Heart left ventricle (tissue), 16 donors: ENCODE measurements at regions of chr4 and their contacts with region 1.

Region 1: DNA sequence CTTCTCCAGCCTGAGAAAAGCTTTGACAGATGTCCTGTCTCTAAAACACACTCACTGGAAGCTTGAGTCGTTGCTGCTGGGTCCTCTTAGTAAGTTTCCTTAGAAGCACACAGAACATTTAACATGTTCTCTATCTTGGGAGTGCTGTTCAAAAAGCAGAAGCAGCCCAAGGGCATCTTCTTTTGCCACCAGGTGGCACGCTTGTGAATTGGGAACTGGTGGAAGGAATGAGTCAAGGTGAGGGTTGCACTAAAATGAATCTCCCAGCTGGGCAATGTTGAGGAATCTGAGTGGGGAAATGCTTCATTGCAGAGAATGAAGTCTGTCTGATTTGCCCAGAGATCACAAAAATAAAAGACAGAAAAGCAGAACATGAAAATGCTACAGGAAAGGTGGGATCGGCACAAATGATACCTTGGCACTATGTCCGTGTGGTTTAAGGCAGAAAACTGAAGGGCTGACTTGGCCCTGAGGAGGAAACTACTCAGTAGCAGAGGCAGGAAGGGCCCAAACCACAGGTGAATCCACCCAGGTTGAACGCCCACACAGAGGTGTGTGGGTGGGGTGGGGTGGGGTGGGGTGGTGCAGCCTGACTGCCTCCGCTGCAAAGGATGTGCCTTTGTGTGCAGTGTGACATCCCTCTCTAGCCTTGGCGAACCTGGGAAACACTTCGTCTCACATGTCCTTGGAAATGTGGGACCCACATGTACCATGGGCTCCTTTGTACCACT is 26.0 kb downstream of the KIT start:
- DNase-seq: peak in 1 of 5 donors; percentile 25
- ATAC-seq: no peak
- H3K4me3 ChIP-seq: no peak overlapping the region
- H3K27ac ChIP-seq: no peak overlapping the region
- H3K4me1 ChIP-seq: no peaks in the 10 kb centered on the region
- H3K27me3 ChIP-seq: no peaks in the 10 kb centered on the region
- CTCF ChIP-seq: peak in 9 of 12 donors; percentile 11 to 45 (median 38)
- POLR2A ChIP-seq: no peak

Region 2: GRCh38 chr4:54793856-54794422 is 110.2 kb after region 1 on chr4:
- intact Hi-C with region 1: loop called in 2 of 10 experiments (anchors 10 kb)
- DNase-seq: no peak
- ATAC-seq: no peak
- H3K4me3 ChIP-seq: no peak overlapping the region
- H3K27ac ChIP-seq: no peak overlapping the region
- H3K4me1 ChIP-seq: no peaks in the 10 kb centered on the region
- H3K27me3 ChIP-seq: no peaks in the 10 kb centered on the region
- CTCF ChIP-seq: no peak
- POLR2A ChIP-seq: no peak

Region 3: GRCh38 chr4:54840992-54841768 is 157.4 kb after region 1 on chr4:
- intact Hi-C with region 1: loop called in 2 of 10 experiments (anchors 5 to 10 kb)
- DNase-seq: peak in 3 of 5 donors; percentile 21 to 37 (median 21)
- ATAC-seq: peak in 3 of 4 donors; percentile 69 to 86 (median 80)
- H3K4me3 ChIP-seq: no peak overlapping the region
- H3K27ac ChIP-seq: no peak overlapping the region
- H3K4me1 ChIP-seq: peaks cover 0 to 16% (median 0%) of the 10 kb centered on the region in 12 donors
- H3K27me3 ChIP-seq: no peaks in the 10 kb centered on the region
- CTCF ChIP-seq: peak in 11 of 12 donors; percentile 22 to 51 (median 36)
- POLR2A ChIP-seq: no peak

Region 4: DNA sequence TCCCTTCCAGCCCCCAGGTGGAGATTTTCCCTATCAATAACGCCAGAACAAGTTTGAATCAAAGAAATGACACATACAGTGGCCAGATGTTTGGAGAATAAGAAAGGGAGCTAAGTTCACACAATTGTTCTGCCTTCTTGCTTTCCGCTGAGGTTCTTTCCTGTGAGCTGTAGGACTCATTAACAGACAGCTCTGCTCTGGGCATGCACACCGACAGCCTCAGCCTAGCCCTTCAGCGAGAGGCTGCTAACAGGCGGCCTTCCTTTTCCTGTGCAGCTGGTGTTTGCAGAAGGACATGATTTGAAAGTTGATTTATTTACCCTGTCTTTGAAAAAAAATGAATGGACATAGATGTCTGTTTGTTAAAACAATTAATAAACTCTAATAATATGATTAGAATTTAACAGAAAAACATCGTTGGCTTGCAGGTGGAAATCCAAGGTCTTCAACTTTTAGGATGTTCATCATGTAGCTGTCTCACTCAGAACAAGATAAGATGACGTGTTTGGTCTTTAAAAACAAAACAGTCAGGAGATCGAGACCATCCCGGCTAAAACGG is 258.3 kb after region 1 on chr4:
- intact Hi-C with region 1: loop called in 1 of 10 experiments (anchors 10 kb)
- DNase-seq: peak in 3 of 5 donors; percentile 39 to 51 (median 41)
- ATAC-seq: peak; percentile 59 to 93 (median 64)
- H3K4me3 ChIP-seq: peak overlapping the region in 2 of 12 donors; percentile 17 to 18
- H3K27ac ChIP-seq: peak overlapping the region in 8 of 12 donors; percentile 1 to 66 (median 36)
- H3K4me1 ChIP-seq: peaks cover 0 to 16% (median 4%) of the 10 kb centered on the region in 12 donors
- H3K27me3 ChIP-seq: no peaks in the 10 kb centered on the region
- CTCF ChIP-seq: no peak
- POLR2A ChIP-seq: no peak